Transverse colon (tissue), 4 donors: ENCODE measurements at regions of chr9 and their contacts with region 1.

Region 1: GRCh38 chr9:87324613-87325194 is 173.0 kb upstream of the DAPK1 start:
- DNase-seq: no peak
- H3K4me3 ChIP-seq: no peak overlapping the region
- H3K27ac ChIP-seq: no peak overlapping the region
- H3K4me1 ChIP-seq: no peaks in the 10 kb centered on the region
- H3K27me3 ChIP-seq: peaks cover 7% of the 10 kb centered on the region
- CTCF ChIP-seq: peak; percentile 73 to 87 (median 79)
- EP300 ChIP-seq: no peak
- POLR2A ChIP-seq: no peak

Region 2: GRCh38 chr9:86413966-86414880 is 910.5 kb before region 1 on chr9:
- in situ Hi-C with region 1: loop called in 2 of 4 experiments (anchors 10 kb)
- intact Hi-C with region 1: no loop called
- DNase-seq: no peak
- H3K4me3 ChIP-seq: no peak overlapping the region
- H3K27ac ChIP-seq: no peak overlapping the region
- H3K4me1 ChIP-seq: no peaks in the 10 kb centered on the region
- H3K27me3 ChIP-seq: peaks cover 4% of the 10 kb centered on the region
- CTCF ChIP-seq: peak; percentile 41 to 78 (median 71)
- EP300 ChIP-seq: no peak
- POLR2A ChIP-seq: no peak

Region 3: GRCh38 chr9:86434039-86434726 is 890.5 kb before region 1 on chr9:
- in situ Hi-C with region 1: loop called in 2 of 4 experiments (anchors 10 to 25 kb)
- intact Hi-C with region 1: loop called (anchors 5 kb)
- DNase-seq: no peak
- H3K4me3 ChIP-seq: no peak overlapping the region
- H3K27ac ChIP-seq: peak overlapping the region in 1 of 4 donors; percentile 42
- H3K4me1 ChIP-seq: no peaks in the 10 kb centered on the region
- H3K27me3 ChIP-seq: peaks cover 4% of the 10 kb centered on the region
- CTCF ChIP-seq: peak; percentile 55 to 66 (median 59)
- EP300 ChIP-seq: no peak
- POLR2A ChIP-seq: no peak

Region 4: GRCh38 chr9:86486891-86487837 is 837.5 kb before region 1 on chr9:
- in situ Hi-C with region 1: no loop called
- intact Hi-C with region 1: loop called (anchors 5 kb)
- DNase-seq: no peak
- H3K4me3 ChIP-seq: no peak overlapping the region
- H3K27ac ChIP-seq: peak overlapping the region in 1 of 4 donors; percentile 29
- H3K4me1 ChIP-seq: peaks cover 0 to 4% (median 0%) of the 10 kb centered on the region in 4 donors
- H3K27me3 ChIP-seq: no peaks in the 10 kb centered on the region
- CTCF ChIP-seq: peak; percentile 36 to 60 (median 54)
- EP300 ChIP-seq: no peak
- POLR2A ChIP-seq: no peak

Region 5: DNA sequence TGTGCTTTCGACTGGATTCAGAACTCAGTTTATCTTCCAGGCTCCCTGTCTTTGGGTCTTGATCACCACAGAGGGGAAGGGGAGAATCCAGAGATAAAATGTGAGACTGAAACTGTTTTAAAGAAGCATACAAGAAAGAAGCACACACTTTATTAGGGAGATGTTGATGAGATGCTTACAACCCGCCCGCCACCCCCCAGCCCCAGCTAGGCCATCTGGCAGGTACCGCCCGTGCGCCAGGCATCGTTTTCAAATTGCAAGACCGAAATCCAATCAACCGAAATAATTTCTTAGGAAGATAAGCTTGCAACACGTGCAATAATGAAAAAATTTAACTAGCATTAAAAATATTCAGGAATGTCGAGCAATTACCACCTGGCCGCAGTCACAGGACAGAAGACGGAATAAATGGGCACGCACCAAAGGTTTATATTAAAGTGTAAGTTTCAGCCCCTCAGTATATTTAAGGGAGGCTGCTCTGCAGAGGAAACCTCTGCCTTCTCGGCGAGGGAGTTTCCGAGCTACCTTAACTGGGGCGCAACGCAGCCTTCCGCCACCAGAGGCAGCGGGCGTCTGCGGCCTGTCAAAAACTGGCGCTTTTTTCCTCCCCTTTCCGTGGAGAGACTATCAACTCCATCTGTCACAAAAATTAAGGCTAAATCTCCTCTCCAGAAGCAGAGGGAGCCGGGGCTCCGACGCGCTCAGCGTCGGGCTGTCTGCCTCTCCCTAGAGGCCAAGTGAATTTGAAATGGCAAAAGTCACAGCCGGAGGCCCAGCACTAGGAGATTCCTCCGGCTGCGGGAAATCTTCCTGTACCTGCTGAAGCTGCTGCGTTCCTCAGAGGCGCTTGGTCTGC is 376.4 kb before region 1 on chr9:
- in situ Hi-C with region 1: loop called in 1 of 4 experiments (anchors 25 kb)
- intact Hi-C with region 1: loop called (anchors 5 kb)
- DNase-seq: peak; percentile 75
- H3K4me3 ChIP-seq: peak overlapping the region; percentile 66 to 91 (median 80)
- H3K27ac ChIP-seq: peak overlapping the region; percentile 83 to 96 (median 88)
- H3K4me1 ChIP-seq: peaks cover 0 to 28% (median 17%) of the 10 kb centered on the region in 4 donors
- H3K27me3 ChIP-seq: peaks cover 25% of the 10 kb centered on the region
- CTCF ChIP-seq: peak; percentile 77 to 93 (median 86)
- EP300 ChIP-seq: no peak
- POLR2A ChIP-seq: no peak

Region 6: GRCh38 chr9:86968258-86968920 is 356.3 kb before region 1 on chr9:
- in situ Hi-C with region 1: loop called in 1 of 4 experiments (anchors 25 kb)
- intact Hi-C with region 1: no loop called
- DNase-seq: no peak
- H3K4me3 ChIP-seq: no peak overlapping the region
- H3K27ac ChIP-seq: no peak overlapping the region
- H3K4me1 ChIP-seq: peaks cover 0 to 9% (median 4%) of the 10 kb centered on the region in 4 donors
- H3K27me3 ChIP-seq: no peaks in the 10 kb centered on the region
- CTCF ChIP-seq: no peak
- EP300 ChIP-seq: no peak
- POLR2A ChIP-seq: no peak